Dorsolateral prefrontal cortex (tissue), 120 donors: ENCODE measurements at regions of chr14 and their contacts with region 1.

Region 1: DNA sequence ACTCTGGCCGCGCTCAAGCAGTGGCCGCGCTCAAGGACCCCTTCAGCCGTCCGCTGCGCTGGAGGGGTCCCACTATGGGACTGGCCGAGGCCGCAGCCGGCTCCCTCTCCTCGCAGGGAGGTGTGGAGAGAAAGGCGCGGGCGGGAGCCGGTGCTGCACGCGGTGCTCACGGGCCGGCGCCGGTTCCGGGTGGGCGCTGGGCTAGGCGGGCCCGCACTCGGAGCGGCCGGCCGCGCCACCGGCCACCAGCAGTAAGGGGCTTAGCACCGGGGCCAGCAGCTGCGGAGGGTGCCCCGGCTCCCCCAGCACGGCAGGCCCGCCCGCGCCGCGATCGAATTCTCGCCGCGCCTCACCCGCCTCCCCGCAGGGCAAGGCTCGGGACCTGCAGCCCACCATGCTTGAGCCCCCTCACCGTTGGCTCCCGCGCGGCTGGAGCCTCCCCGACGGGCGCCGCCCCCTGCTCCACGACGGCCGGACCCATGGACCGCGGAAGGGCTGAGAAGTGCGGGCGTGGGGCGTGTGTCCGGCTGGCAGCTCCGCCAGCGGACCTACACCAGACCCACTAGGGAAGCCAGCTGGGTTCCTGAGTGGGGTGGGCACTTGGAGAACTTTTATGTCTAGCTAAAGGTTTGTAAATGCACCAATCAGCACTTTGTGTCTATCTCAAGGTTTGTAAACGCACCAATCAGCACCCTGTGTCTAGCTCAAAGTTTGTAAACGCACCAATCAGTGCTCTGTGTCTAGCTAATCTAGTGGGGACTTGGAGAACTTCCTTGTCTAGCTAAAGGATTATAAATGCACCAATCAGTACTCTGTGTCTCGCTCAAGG is 49.5 kb downstream of the KLHL28 start:
- DNase-seq: no peak
- H3K4me3 ChIP-seq: peak overlapping the region; percentile 32 to 75 (median 57)
- H3K27ac ChIP-seq: no peak overlapping the region
- H3K27me3 ChIP-seq: peaks cover 0 to 15% (median 4%) of the 10 kb centered on the region in 45 donors
- CTCF ChIP-seq: no peak

Region 2: DNA sequence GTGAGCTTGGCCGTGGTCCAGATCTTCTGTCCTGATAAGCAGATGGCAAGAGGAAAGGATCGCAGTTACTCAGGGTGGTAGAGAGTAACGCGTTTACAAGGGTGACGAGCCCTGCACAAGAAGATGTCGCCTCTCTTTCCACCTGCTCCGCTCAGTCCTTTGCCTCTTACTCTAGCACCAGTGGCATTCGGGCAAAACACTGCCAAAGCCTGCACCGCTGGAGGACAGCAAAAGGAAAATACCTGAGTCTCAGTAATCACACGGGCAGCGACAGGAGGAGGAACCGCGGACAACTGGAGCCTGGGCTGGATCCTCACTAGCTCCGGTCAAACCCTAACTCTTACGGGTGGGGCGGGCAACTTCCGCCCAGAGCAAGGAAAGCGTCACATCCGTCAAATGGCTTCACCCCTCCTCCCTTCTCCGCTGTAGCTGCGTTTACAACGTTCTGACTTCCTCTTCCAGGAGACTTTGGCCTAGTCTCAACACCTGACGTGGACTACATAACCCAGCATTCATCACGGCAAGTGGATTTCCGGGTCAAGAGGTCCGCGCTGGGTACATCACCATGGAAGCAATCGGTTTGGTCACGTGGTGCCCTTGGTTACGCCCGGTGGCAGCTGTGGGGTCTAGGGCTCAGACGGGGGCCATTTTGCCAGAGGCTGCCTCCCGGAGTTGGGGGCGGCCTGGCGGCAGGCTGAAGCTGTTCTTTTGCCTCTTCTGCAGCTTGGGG is 49.5 kb after region 1 on chr14 and contains the starts of genes KLHL28 and TOGARAM1:
- intact Hi-C with region 1: loop called in 1 of 2 experiments (anchors 5 kb)
- DNase-seq: peak; percentile 96 to 100 (median 99)
- H3K4me3 ChIP-seq: peak within 1 kb of the TSS; percentile 56 to 98 (median 87)
- H3K27ac ChIP-seq: peak within 1 kb of the TSS; percentile 42 to 95 (median 87)
- H3K27me3 ChIP-seq: no peaks in the 10 kb centered on the region
- CTCF ChIP-seq: peak in 11 of 56 donors; percentile 5 to 40 (median 15)
- total RNA-seq, gene KLHL28: 15.5 to 37.2 (median 24.2) TPM
- total RNA-seq, gene TOGARAM1: 39.9 to 74.9 (median 59.1) TPM

Region 3: DNA sequence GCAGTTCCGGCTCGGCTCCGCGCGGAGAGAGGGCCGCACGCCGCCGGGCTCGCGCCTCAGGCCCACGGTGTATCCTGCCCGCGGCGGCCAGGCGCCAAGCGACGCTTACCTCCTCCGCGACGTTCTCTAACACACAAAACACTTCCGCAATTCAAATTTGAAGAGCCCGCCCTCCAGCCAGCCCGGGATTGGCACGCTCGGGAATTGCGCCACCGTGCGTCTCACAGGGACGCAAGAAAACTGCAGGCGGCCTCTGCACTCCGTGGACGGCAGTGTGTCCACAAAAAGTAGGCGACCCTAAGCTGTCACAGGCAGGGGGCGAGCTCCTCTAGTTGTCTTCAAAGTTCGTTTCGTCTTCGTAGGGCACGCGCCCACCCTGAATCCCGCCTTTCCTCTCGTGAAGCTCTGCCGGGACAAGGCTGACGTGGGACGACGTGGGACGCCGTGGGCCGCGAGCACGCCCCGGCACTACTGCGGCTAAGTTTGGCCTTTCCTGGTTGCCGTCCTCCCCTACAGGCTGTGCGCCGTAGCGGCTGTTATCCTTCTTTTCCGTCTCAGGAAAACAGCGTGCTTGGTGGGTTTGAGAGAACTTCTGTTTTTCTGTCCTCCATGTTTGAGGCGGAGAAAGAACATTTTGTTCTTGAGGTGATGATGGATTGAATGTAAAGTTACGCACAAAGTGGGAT is 341.0 kb after region 1 on chr14 and contains the start of gene MIS18BP1:
- intact Hi-C with region 1: loop called (anchors 5 kb)
- DNase-seq: peak; percentile 64 to 92 (median 88)
- H3K4me3 ChIP-seq: peak within 1 kb of the TSS; percentile 56 to 98 (median 81)
- H3K27ac ChIP-seq: peak within 1 kb of the TSS; percentile 6 to 96 (median 85)
- H3K27me3 ChIP-seq: no peaks in the 10 kb centered on the region
- CTCF ChIP-seq: peak; percentile 45 to 87 (median 71)
- total RNA-seq, gene MIS18BP1: 5.1 to 26.8 (median 15.0) TPM

Region 4: GRCh38 chr14:45267071-45267470 is 354.8 kb after region 1 on chr14:
- intact Hi-C with region 1: loop called in 1 of 2 experiments (anchors 2 kb)
- DNase-seq: no peak
- H3K4me3 ChIP-seq: no peak overlapping the region
- H3K27ac ChIP-seq: no peak overlapping the region
- H3K27me3 ChIP-seq: peaks cover 0 to 3% (median 0%) of the 10 kb centered on the region in 45 donors
- CTCF ChIP-seq: no peak